ENCODE measurements at regions of chr22 and their contacts with region 1.

Region 1: GRCh38 chr22:31394326-31394725 is 5.1 kb upstream of the DRG1 start:
- DNase-seq: no peak
- ATAC-seq: no peak

Region 2: DNA sequence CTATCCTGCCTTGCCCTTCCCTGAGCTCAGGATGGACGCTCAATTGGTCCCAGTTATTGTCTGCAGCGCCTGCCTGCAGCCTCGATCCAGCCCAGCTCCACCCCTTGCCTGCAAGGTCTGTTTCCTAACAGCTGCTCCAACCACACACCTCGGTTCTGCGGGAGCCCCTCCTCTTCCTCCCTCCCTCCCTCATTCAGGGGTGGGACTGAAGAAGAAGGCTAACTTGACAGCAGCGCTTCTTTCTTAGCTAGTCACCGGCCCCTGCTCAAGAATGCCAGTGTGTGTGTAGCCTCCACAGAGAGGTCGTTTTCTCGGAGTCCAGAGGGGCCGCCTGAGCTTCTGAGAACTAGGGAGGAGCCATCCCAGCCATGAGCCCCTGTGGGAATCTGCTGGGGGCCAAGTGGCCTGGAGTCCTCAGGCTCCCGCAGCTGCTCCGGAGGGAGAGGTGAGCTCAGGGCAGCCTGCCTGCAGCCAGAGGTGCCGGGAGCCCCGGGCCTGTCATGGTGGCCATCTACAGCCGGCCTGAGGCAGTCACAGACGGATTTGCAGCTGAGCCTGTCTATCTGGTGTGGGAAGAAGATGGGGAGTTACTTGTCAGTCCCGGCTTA is 146.1 kb before region 1 on chr22:
- intact Hi-C with region 1: no loop called
- DNase-seq: peak; percentile 48 to 61
- ATAC-seq: peak; percentile 67

Region 3: GRCh38 chr22:31350410-31350863 is 43.9 kb before region 1 on chr22:
- intact Hi-C with region 1: loop called in 1 of 2 experiments (anchors 5 kb)
- DNase-seq: no peak
- ATAC-seq: no peak

Region 4: DNA sequence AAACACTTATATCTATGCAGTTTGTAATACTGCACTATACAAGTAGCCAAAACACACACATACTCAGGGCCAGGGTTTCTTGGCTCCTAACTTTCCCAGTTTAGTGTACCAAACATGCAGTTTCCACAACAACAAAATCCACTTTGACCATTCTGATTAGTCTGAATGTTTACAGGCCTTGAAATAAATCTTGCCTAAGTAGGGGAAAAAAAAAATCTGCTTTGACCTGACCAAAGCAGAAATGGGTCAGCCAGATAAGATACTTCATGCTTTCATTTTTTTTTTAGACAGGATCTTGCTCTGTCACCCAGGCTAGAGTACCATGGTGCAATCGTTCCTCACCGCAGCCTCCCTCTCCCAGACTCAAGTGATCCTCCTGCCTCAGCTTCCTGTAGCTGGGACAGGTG is 345.5 kb after region 1 on chr22:
- intact Hi-C with region 1: no loop called
- DNase-seq: no peak
- ATAC-seq: no peak

Measured in left colon (tissue), 2 donors.